Gastrocnemius medialis (tissue), 4 donors: ENCODE measurements at regions of chr16 and their contacts with region 1.

Region 1: DNA sequence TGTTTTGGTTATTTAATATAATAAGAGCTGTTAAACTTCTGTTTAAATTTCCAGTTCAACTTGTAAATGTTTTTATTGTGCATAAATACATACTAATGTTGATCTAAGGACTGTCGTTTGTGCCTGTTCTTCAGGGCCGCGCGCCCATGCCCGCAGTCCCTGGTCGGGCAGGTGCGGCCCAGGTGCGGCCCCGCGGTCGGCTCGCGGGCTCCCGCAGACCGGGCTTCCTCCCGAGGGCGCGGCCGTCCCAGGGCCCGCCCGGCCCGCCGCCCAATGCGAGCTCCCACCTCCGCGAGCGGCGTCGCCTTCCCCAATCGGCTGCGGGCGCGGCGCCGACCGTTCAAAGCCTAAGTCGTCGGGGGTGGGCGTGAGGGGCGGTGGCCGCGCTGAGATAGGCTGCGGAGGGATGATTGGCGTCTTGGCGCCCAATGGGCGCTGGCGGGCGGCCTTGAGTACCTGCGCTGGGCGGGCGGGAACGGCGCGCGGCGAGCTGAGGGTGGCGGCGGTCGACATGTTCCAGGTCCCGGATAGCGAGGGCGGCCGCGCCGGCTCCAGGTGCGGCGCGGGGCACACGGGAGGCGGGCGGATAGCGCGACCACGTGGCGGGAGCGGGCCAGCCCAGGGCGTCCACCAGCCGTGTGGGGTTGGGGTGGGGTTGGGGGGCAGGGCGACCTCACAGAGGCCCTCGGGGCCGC is at the start of gene JPT2:
- DNase-seq: peak; percentile 91 to 96
- ATAC-seq: peak; percentile 95 to 98
- H3K4me3 ChIP-seq: peak within 1 kb of the TSS; percentile 53 to 74 (median 68)
- H3K27ac ChIP-seq: peak within 1 kb of the TSS; percentile 68 to 79 (median 71)
- H3K4me1 ChIP-seq: peaks cover 0 to 4% of the 10 kb centered on the region in 2 donors
- H3K27me3 ChIP-seq: no peaks in the 10 kb centered on the region
- CTCF ChIP-seq: no peak
- POLR2A ChIP-seq: peak; percentile 50 to 59
- total RNA-seq, gene JPT2: 8.7 to 28.2 (median 15.9) TPM

Region 2: DNA sequence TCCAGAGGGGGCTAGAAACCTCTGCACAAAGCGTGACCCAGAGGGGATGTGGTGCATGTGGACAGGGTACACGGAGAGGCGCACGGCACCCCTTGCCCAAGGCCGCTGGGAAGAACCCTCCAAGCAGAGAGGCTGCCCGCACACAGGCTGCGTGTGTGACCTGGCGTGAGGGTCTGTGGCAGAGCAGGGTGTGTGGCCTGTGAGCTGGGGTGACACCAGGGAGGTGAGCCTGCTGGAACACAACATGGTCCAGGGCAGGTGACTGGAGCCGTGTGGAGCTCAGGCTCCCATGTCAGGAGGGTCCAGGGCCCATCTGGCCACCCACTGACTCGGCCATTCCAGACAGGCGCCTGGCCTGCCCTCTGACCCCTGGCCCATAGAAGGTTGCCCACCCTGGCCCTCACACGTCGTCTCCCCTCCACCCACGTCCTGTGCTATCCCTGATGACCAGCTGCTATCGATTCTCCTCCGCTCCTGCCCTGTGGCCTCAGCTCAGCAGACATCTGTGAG is 159.3 kb before region 1 on chr16:
- in situ Hi-C with region 1: no loop called
- intact Hi-C with region 1: no loop called
- DNase-seq: no peak
- ATAC-seq: no peak
- H3K4me3 ChIP-seq: no peak overlapping the region
- H3K27ac ChIP-seq: no peak overlapping the region
- H3K4me1 ChIP-seq: no peaks in the 10 kb centered on the region
- H3K27me3 ChIP-seq: no peaks in the 10 kb centered on the region
- CTCF ChIP-seq: no peak
- POLR2A ChIP-seq: no peak

Region 3: DNA sequence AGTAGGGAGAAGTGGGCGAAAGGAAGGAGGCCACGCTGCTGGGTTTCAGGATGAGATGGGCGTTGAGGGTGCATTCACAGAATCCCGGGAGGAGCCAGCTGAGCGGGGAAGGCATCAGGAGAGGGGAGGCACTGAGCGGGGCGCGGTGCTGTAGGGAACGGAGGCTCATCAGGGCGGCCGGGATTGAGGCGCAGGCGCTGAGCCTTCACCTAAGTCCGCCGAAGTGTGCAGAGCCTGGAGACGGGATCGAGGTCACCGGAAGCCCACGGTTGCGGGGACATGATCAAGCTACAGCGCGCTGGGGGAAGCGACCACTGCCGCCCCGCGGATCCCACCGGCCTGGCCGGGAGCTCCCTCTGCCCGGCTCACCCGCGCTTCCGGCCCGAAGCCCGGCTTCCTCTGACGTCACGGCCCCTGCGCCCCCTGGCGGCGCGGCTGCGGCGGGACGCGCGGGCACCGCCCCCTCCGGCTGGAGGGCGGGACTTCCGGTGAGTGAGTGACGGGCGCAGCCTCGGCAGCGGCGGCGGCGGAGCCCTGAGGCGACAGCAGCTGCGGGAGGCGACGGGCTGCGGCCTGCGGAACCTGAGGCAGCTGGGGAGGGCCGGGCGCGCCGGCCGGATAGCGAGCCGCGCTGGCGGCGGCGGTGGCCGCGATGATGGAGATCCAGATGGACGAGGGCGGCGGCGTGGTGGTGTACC is 27.9 kb after region 1 on chr16 and contains the start of gene MAPK8IP3:
- in situ Hi-C with region 1: no loop called
- intact Hi-C with region 1: loop called (anchors 1 kb)
- DNase-seq: peak; percentile 75 to 88
- ATAC-seq: peak; percentile 86 to 91
- H3K4me3 ChIP-seq: peak within 1 kb of the TSS; percentile 85 to 96 (median 88)
- H3K27ac ChIP-seq: peak within 1 kb of the TSS; percentile 89 to 94 (median 92)
- H3K4me1 ChIP-seq: peaks cover 28 to 31% of the 10 kb centered on the region in 2 donors
- H3K27me3 ChIP-seq: no peaks in the 10 kb centered on the region
- CTCF ChIP-seq: peak; percentile 68 to 100 (median 100)
- POLR2A ChIP-seq: peak; percentile 97 to 99
- total RNA-seq, gene MAPK8IP3: 6.5 to 22.6 (median 13.9) TPM